ENCODE measurements at regions of chr17 and their contacts with region 1.

Region 1: DNA sequence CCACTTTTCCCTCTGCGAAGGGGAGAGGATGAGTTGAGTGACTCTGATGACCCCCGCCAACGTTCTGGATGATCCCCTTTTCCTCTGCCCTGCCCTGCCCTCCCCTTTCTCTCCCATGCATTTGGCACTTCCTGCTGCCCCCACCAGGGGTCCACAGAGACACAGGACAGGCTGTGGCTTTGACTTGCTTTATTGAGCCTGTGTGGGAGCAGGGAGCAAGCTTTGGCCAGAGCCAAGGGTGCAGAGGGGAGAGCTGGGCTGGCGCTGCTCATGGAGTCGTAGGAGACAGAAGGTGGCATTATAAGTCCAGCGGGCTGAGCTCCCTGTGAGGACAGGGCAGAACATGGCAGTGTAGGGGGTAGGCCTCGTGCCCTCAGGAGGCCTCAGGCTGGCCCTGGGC is 1.6 kb downstream of the PPY start:
- DNase-seq: peak; percentile 60
- ATAC-seq: peak; percentile 31; the same call in 1 of the 2 replicates
- H3K4me3 ChIP-seq: no peak overlapping the region
- H3K27ac ChIP-seq: no peak overlapping the region
- H3K4me1 ChIP-seq: peaks cover 3% of the 10 kb centered on the region; the same call in 1 of the 2 replicates
- H3K27me3 ChIP-seq: no peaks in the 10 kb centered on the region
- CTCF ChIP-seq: peak; percentile 70

Region 2: GRCh38 chr17:43904457-43904856 is 36.2 kb before region 1 on chr17:
- CTCF ChIA-PET with region 1: no interaction called
- POLR2A ChIA-PET with region 1: no interaction called
- intact Hi-C with region 1: no loop called
- DNase-seq: no peak
- ATAC-seq: no peak
- H3K4me3 ChIP-seq: no peak overlapping the region
- H3K27ac ChIP-seq: no peak overlapping the region
- H3K4me1 ChIP-seq: 0 out of 2 replicates have a peak, but pooled peaks cover 5% of the 10 kb centered on the region
- H3K27me3 ChIP-seq: peaks cover 37% of the 10 kb centered on the region
- CTCF ChIP-seq: no peak

Region 3: GRCh38 chr17:43952717-43953666 is 12.4 kb after region 1 on chr17:
- CTCF ChIA-PET with region 1: interaction called, 10 read pairs
- POLR2A ChIA-PET with region 1: no interaction called
- intact Hi-C with region 1: no loop called
- DNase-seq: no peak
- ATAC-seq: no peak
- H3K4me3 ChIP-seq: no peak overlapping the region
- H3K27ac ChIP-seq: no peak overlapping the region
- H3K4me1 ChIP-seq: no peaks in the 10 kb centered on the region
- H3K27me3 ChIP-seq: no peaks in the 10 kb centered on the region
- CTCF ChIP-seq: no peak

Region 4: DNA sequence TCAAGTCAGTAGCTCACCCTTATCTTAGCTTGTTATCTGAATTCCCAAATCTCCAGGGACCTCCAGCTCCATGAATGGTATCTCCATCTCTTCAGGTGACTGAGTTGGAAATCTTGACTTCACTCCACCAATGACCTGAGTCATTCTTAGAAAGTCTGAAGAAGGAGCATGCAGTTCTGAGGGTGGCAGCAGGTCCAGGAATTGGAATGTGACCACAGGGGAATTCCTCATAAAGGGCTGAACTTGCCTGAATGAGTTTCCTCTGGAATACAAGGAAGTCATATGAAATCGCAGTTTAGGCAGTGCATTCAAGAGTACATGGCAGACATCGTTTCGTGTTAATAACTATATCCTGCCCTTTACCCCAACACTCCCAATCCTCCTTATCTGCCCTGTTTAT is 25.6 kb after region 1 on chr17:
- CTCF ChIA-PET with region 1: no interaction called
- POLR2A ChIA-PET with region 1: no interaction called
- intact Hi-C with region 1: no loop called
- DNase-seq: no peak
- ATAC-seq: no peak
- H3K4me3 ChIP-seq: no peak overlapping the region
- H3K27ac ChIP-seq: no peak overlapping the region
- H3K4me1 ChIP-seq: no peaks in the 10 kb centered on the region
- H3K27me3 ChIP-seq: no peaks in the 10 kb centered on the region
- CTCF ChIP-seq: no peak

Region 5: DNA sequence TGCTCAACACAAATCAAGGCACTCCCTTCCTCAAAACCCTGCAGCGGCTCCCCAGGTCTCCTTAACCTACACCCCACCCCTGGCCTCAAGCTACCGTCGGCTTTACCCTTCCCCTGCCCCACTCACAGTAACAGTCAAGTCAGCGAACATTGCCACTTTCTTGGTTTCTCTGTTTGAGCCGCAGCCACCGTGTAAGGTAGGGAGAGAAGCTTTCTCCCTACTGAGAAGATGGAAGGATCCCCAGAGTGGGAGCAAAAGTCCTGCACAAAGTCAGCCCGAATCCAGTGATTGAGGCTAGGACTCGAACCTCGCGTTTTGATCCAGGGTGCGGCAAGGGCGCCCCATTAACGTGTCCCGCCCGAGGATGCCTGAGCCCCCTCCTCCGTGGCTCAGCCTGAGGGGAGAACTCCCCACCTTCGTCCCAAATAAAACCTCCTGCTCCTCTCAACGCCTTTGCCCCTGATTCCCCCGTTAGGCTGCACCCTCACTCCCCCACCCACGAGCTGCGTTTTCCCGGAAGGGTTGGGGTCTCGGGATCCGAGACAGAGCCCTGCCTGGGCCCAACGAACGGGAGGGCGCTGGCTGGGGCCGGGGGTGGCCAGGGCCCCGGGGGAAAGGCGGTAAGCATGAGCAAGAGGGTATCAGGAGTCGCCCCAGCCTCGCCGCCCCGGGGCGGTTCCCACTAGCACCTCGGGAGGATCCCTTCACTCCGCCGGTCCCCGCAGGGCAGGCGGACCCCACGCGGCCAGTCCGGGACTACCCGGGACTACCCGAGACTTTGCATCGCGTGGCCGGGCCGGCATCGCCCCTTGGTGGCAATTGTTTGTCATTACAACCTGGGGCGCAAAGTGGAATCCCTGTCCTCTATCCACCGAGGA is 53.9 kb after region 1 on chr17:
- CTCF ChIA-PET with region 1: interaction called, 11 read pairs
- POLR2A ChIA-PET with region 1: no interaction called
- intact Hi-C with region 1: loop called (anchors 1 kb)
- DNase-seq: peak; percentile 87
- ATAC-seq: peak; percentile 90
- H3K4me3 ChIP-seq: peak overlapping the region; percentile 70
- H3K27ac ChIP-seq: no peak overlapping the region
- H3K4me1 ChIP-seq: peaks cover 10% of the 10 kb centered on the region; the same call in 1 of the 2 replicates
- H3K27me3 ChIP-seq: no peaks in the 10 kb centered on the region
- CTCF ChIP-seq: peak; percentile 97

Region 6: GRCh38 chr17:44044067-44044466 is 103.4 kb after region 1 on chr17:
- CTCF ChIA-PET with region 1: interaction called, 10 read pairs
- POLR2A ChIA-PET with region 1: no interaction called
- intact Hi-C with region 1: loop called (anchors 1 kb)
- DNase-seq: peak; percentile 62
- ATAC-seq: peak; percentile 64
- H3K4me3 ChIP-seq: no peak overlapping the region
- H3K27ac ChIP-seq: 0 out of 2 replicates have a peak overlapping the region, but pooled peaks have one; percentile 15
- H3K4me1 ChIP-seq: peaks cover 16% of the 10 kb centered on the region
- H3K27me3 ChIP-seq: no peaks in the 10 kb centered on the region
- CTCF ChIP-seq: no peak

Region 7: DNA sequence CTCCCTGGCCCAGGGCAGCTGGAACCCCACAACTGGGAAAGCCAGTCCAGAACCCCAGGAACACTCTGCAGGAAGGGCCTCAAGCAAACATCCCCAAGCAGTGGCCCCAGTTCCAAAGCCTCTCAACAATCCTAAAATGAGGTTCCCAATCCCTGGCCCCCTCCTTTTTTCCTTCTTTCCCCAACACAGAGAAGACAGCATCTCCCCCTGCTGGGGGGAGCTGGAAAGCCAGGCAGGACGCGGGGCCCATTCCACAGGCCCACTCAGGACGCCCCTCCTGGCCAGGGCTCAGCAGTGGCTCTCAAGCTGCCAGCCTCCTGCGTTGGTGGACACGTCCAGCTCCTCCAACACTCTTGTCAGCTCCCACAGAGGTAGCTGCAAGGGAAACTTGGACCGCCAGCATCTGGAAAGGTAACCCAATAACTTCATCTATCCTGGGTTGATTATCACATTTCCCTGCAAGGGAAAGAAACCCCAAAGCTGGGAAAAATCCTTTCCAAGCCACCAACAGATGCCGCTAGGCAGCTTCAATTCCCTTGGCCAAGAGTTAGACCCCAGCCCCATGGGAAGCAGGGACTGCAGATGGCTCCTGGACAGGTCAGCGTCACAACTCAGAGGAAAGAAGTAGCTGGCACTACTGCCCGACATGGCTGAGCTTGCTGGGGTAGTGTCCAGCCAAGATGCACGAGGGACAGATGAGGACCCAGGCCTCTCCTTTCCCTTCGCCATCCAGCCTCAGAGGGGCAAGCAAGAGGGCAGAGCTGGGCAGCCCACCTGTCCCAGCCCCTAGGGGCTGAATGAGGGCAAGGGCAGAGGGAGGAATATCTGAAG is 175.2 kb after region 1 on chr17:
- CTCF ChIA-PET with region 1: interaction called, 11 read pairs
- POLR2A ChIA-PET with region 1: no interaction called
- intact Hi-C with region 1: no loop called
- DNase-seq: peak; percentile 53
- ATAC-seq: peak; percentile 18; the same call in 1 of the 2 replicates
- H3K4me3 ChIP-seq: no peak overlapping the region
- H3K27ac ChIP-seq: no peak overlapping the region
- H3K4me1 ChIP-seq: peaks cover 10% of the 10 kb centered on the region
- H3K27me3 ChIP-seq: no peaks in the 10 kb centered on the region
- CTCF ChIP-seq: peak; percentile 90

Region 8: GRCh38 chr17:44170499-44171201 is 230.0 kb after region 1 on chr17 and contains the start of gene ASB16:
- CTCF ChIA-PET with region 1: interaction called, 10 read pairs
- POLR2A ChIA-PET with region 1: no interaction called
- intact Hi-C with region 1: no loop called
- DNase-seq: no peak
- ATAC-seq: no peak; the same call in 1 of the 2 replicates
- H3K4me3 ChIP-seq: no peak within 1 kb of the TSS
- H3K27ac ChIP-seq: no peak within 1 kb of the TSS
- H3K4me1 ChIP-seq: peaks cover 9% of the 10 kb centered on the region
- H3K27me3 ChIP-seq: no peaks in the 10 kb centered on the region
- CTCF ChIP-seq: no peak
- total RNA-seq, gene ASB16: 0.35 and 0.51 TPM in 2 replicates

Measured in PC-3 (cell line).